Activated naive CD8-positive, alpha-beta T cell treated with anti-CD3 and anti-CD28 coated beads, Interleukin-2, amount 10 ng/mL, durations not matched to agents 7 days and 5 days (primary cell): ENCODE measurements at regions of chr19 and their contacts with region 1.

Region 1: DNA sequence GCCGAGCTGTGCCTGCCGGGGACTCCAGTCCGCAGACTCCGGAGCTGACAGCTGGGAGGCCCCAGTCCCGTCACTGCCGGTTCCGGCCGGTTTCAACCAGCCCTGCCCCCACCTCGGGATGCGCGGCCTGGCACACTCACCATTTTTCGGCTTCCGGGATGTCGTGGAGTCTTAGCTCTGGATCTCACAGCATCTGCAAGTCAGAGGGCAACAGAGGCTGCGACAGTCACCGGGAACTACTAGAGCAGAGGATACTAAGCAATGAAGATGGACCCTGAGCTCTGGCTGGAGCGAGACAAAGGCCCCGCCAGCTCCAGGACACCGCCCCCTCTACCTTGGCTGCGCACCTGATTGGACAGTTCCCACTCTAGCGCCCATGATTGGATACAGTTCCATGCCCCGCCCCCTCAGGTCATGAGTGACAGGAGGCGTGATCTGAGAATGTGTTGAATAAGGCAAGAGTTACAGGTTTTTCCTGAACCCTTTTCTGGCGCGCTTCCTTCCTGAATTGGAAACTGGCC is at the start of gene ZNF682:
- DNase-seq: peak; percentile 90
- ATAC-seq: peak; percentile 99
- H3K4me3 Mint-ChIP-seq: peak within 1 kb of the TSS; percentile 96
- H3K27ac Mint-ChIP-seq: peak within 1 kb of the TSS; percentile 96
- H3K4me1 Mint-ChIP-seq: peaks cover 11% of the 10 kb centered on the region
- H3K27me3 Mint-ChIP-seq: peaks cover 4% of the 10 kb centered on the region
- total RNA-seq, gene ZNF682: 13.1 to 16.9 TPM

Region 2: DNA sequence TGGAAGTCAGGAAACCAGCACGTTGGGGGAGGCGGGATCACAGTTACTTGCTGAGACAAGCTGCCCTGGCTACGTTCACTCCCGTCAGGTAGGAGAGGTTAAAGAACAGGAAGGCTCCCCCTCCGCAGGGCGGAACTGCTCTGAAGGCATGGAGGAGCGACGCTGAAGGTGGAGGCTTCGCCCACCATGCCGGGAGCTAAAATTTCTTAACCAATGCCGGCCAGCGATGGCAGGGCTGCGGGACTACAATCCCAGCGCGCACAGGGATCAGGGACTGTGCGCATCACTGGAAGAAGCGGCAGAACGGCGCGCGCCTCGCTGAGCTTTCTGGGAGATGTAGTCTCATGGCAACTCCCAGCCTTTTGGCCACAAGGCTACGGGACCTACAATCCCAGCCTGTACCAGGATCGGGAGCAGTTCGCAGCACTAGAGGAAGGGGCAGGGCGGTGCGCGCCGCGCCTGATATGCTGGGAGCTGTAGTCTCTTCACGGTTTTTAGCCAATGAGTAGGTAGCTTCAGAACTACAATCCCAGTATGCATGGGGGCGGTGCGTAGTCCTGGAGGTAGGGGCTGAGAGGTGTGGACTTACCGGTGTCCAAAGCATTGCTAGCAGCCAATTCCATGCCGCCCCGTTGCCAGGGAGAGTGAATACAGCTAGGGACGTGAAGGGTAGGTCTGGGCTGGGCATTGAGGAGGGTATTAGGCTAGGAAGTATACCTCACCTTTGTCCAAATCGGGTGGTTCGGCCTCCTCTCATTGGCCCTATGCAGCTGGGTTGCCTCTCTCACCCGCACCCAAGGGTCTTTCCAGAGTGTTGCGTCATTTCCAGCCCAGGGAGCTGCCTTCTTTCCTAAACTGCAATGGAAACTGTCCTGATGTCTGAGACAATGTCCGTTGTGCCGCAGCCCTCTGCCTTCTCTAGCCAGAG is 12.8 kb after region 1 on chr19:
- POLR2A ChIA-PET with region 1: interaction called, 22 read pairs
- DNase-seq: peak; percentile 71
- ATAC-seq: peak; percentile 98
- H3K4me3 Mint-ChIP-seq: peak overlapping the region; percentile 98
- H3K27ac Mint-ChIP-seq: peak overlapping the region; percentile 87
- H3K4me1 Mint-ChIP-seq: peaks cover 8% of the 10 kb centered on the region
- H3K27me3 Mint-ChIP-seq: no peaks in the 10 kb centered on the region

Region 3: GRCh38 chr19:20107301-20107700 is 68.0 kb after region 1 on chr19:
- POLR2A ChIA-PET with region 1: no interaction called
- DNase-seq: no peak
- ATAC-seq: no peak
- H3K4me3 Mint-ChIP-seq: no peak overlapping the region
- H3K27ac Mint-ChIP-seq: no peak overlapping the region
- H3K4me1 Mint-ChIP-seq: no peaks in the 10 kb centered on the region
- H3K27me3 Mint-ChIP-seq: no peaks in the 10 kb centered on the region

Region 4: DNA sequence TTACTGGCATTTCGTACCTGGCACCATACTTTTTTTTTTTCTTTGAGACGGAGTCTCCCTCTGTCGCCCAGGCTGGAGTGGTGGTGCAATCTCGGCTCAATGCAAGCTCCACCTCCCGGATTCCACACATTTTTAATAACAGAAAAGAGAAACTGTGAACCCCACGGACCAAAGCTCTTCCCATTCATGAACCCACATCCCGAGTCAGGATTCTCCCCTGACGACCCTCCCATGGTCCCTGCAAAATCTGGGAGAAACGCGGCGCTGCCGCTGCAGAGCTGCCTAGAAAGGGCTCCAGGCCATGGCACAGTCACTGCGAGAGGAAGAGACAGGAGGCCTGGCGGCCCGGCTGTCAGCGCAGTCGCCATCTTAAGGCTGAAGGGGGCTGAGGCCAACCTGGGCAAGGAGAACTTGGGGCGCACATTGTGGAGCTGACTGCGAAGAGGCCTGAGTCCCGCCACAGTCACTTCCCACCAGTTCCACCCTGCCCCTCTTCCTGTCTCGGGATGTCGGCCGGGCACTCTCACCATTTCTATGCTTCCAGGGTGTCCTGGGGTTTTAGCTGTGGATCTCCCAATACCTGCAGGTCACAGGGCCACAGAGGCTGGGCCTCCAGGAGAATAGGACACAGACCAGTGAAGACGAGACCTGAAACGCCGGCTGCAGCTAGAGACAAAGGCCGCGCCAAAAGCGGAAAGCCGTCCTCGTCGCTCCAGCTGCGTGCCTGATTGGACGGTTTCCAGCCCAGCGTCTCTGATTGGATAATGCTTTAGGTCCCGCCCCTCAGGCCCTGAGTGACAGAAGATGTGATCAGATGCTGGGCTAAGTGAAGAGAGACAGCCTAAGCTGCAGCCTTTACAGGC is 198.7 kb after region 1 on chr19:
- POLR2A ChIA-PET with region 1: interaction called, 11 read pairs
- DNase-seq: peak; percentile 87
- ATAC-seq: peak; percentile 94
- H3K4me3 Mint-ChIP-seq: peak overlapping the region; percentile 99
- H3K27ac Mint-ChIP-seq: peak overlapping the region; percentile 98
- H3K4me1 Mint-ChIP-seq: peaks cover 5% of the 10 kb centered on the region
- H3K27me3 Mint-ChIP-seq: no peaks in the 10 kb centered on the region